Adrenal gland (tissue), 19 donors: ENCODE measurements at regions of chr7 and their contacts with region 1.

Region 1: DNA sequence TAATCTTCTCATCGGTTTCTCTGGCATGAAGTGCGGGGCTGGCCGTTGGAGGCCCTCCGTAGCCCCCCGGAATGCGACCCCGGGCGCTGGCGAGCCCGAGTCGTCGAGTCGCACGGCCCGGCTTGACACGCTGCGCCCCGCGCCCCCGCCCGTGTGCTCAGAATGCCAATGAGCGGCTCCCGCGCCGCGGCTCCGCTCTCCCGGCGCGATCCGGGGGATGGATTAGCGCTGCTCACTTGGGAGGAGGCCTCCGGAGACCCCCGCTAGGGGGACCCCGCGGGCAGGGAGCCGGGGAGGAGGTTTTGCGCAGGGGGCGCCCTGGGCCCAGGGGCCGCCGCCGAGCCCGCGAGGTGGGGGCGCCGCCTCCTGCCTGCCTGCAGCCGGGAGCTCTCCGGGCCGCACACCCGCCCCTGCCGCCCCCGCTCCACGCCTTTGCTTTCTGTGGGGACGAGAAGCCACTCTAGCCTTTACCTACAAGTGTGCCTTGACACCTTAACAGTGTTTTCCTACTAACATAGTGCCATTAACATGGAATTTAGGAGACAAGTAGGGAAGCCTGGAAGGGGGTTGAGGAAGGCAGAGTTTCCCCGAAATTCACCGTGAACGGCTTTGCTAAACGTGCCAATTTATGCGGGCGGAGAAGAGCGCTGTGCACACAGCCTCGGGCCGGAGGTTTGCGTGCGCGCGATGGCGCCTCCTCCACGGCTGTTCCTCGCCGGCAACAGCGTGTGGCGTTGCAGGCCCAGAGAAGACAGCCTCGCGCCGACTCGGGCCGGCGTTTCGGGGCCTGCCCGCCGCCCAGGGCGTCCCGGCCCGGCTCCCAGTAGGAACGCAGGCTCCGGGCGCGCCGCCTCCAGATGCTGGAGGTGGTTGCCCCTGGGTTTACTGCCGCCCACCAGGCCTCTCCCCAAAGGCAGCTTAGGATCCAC is 7.1 kb downstream of the SHH start:
- DNase-seq: no peak
- H3K4me3 ChIP-seq: peak overlapping the region in 1 of 4 donors; percentile 29
- H3K27ac ChIP-seq: no peak overlapping the region
- H3K4me1 ChIP-seq: peaks cover 0 to 31% of the 10 kb centered on the region in 2 donors
- H3K27me3 ChIP-seq: peaks cover 24% of the 10 kb centered on the region
- CTCF ChIP-seq: peak in 1 of 6 experiments; percentile 8
- POLR2A ChIP-seq: no peak

Region 2: GRCh38 chr7:155685070-155685790 is 119.9 kb before region 1 on chr7:
- intact Hi-C with region 1: no loop called
- DNase-seq: no peak
- H3K4me3 ChIP-seq: no peak overlapping the region
- H3K27ac ChIP-seq: no peak overlapping the region
- H3K4me1 ChIP-seq: no peaks in the 10 kb centered on the region
- H3K27me3 ChIP-seq: no peaks in the 10 kb centered on the region
- CTCF ChIP-seq: no peak
- POLR2A ChIP-seq: no peak

Region 3: GRCh38 chr7:155824227-155824886 is 19.2 kb after region 1 on chr7:
- intact Hi-C with region 1: no loop called
- DNase-seq: peak; percentile 74 to 92 (median 86)
- H3K4me3 ChIP-seq: no peak overlapping the region
- H3K27ac ChIP-seq: peak overlapping the region in 3 of 5 donors; percentile 43 to 79 (median 77)
- H3K4me1 ChIP-seq: no peaks in the 10 kb centered on the region
- H3K27me3 ChIP-seq: no peaks in the 10 kb centered on the region
- CTCF ChIP-seq: no peak
- POLR2A ChIP-seq: peak in 1 of 2 donors; percentile 14

Region 4: DNA sequence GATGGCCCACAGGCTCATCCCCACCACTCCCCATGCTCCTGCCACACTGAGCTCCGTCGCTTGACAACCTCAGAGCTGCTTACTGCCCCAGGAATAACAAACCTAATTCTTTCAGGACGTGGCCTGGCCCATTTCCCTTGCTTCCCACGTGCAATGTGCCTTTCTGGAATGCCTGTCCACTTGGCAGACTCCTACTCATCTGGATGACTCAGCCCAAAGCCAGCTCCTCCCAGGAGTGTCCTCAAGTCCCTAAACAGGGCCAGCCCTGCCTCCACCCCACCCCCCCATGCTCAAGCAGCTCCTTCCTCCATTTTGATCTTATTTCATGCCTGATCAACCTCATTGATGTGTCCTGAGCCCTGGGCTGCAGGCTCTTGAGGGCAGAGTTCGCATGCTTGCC is 670.5 kb after region 1 on chr7:
- intact Hi-C with region 1: loop called in 1 of 2 experiments (anchors 5 kb)
- DNase-seq: peak; percentile 56 to 89 (median 83)
- H3K4me3 ChIP-seq: no peak overlapping the region
- H3K27ac ChIP-seq: peak overlapping the region in 1 of 5 donors; percentile 37
- H3K4me1 ChIP-seq: peaks cover 11 to 15% of the 10 kb centered on the region in 2 donors
- H3K27me3 ChIP-seq: no peaks in the 10 kb centered on the region
- CTCF ChIP-seq: no peak
- POLR2A ChIP-seq: no peak

Region 5: DNA sequence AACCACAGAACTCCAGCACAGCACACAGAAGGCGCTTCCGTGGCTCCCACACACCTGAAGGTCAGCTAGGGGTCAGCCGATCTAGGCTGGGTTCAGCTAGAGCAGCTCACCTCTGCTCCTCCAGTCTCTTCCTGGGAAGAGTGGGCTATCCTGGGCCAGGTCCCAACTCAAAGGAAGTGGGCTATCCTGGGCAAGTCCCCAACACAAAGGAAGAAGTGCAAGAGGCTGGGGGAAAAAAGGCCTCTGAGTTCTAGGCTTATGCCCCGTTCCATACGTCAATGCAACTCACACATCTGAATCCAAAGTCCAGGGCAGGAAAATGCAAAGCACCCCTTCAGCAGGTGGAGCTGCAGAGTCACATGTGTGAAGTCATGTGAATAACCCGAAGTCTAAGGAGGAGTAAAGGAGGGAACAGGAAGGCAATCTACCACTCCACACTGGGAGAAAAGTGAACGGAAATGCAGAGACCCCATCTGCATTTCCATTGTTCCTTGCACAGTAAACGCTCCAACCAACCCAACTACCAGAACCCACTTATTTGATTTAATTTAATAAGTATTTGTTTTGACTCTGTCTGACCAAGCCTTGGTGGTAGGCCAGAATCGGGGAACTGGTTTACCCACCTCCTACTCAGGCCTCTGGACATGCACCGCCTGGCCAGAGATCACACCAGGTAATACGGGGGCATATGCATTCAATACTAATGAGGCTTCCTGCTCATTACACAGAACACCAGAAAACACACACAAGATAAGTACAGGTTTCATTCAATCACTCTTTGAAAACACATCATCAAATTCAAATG is 740.0 kb after region 1 on chr7:
- intact Hi-C with region 1: loop called (anchors 5 to 10 kb)
- DNase-seq: no peak
- H3K4me3 ChIP-seq: no peak overlapping the region
- H3K27ac ChIP-seq: no peak overlapping the region
- H3K4me1 ChIP-seq: no peaks in the 10 kb centered on the region
- H3K27me3 ChIP-seq: no peaks in the 10 kb centered on the region
- CTCF ChIP-seq: no peak
- POLR2A ChIP-seq: no peak

Region 6: GRCh38 chr7:156607332-156608172 is 802.4 kb after region 1 on chr7:
- intact Hi-C with region 1: loop called in 1 of 2 experiments (anchors 10 kb)
- DNase-seq: peak in 1 of 7 donors; percentile 13
- H3K4me3 ChIP-seq: peak overlapping the region; percentile 18 to 65 (median 30)
- H3K27ac ChIP-seq: peak overlapping the region in 1 of 5 donors; percentile 56
- H3K4me1 ChIP-seq: peaks cover 0 to 3% of the 10 kb centered on the region in 2 donors
- H3K27me3 ChIP-seq: no peaks in the 10 kb centered on the region
- CTCF ChIP-seq: no peak
- POLR2A ChIP-seq: no peak